ENCODE measurements at regions of chr2 and their contacts with region 1.

Region 1: GRCh38 chr2:207938415-207938814 is 86.9 kb downstream of the PLEKHM3 start:
- DNase-seq: no peak
- ATAC-seq: no peak
- H3K4me3 ChIP-seq: no peak overlapping the region
- H3K27ac ChIP-seq: no peak overlapping the region
- H3K4me1 ChIP-seq: no peaks in the 10 kb centered on the region
- H3K27me3 ChIP-seq: no peaks in the 10 kb centered on the region
- CTCF ChIP-seq: no peak
- POLR2A ChIP-seq: no peak
- RAD21 ChIP-seq: no peak

Region 2: GRCh38 chr2:207792244-207792785 is 146.1 kb before region 1 on chr2:
- CTCF ChIA-PET with region 1: no interaction called
- POLR2A ChIA-PET with region 1: interaction called, 11 read pairs
- dilution Hi-C with region 1: no loop called
- in situ Hi-C with region 1: no loop called
- intact Hi-C with region 1: no loop called
- DNase-seq: peak; percentile 66
- ATAC-seq: peak; percentile 88
- H3K4me3 ChIP-seq: no peak overlapping the region
- H3K27ac ChIP-seq: no peak overlapping the region
- H3K4me1 ChIP-seq: peaks cover 7% of the 10 kb centered on the region
- H3K27me3 ChIP-seq: no peaks in the 10 kb centered on the region; the same call in 1 of the 2 replicates
- CTCF ChIP-seq: no peak
- POLR2A ChIP-seq: no peak
- RAD21 ChIP-seq: no peak

Measured in IMR-90 (cell line).